CD4-positive, alpha-beta memory T cell (primary cell): ENCODE measurements at regions of chr10 and their contacts with region 1.

Region 1: DNA sequence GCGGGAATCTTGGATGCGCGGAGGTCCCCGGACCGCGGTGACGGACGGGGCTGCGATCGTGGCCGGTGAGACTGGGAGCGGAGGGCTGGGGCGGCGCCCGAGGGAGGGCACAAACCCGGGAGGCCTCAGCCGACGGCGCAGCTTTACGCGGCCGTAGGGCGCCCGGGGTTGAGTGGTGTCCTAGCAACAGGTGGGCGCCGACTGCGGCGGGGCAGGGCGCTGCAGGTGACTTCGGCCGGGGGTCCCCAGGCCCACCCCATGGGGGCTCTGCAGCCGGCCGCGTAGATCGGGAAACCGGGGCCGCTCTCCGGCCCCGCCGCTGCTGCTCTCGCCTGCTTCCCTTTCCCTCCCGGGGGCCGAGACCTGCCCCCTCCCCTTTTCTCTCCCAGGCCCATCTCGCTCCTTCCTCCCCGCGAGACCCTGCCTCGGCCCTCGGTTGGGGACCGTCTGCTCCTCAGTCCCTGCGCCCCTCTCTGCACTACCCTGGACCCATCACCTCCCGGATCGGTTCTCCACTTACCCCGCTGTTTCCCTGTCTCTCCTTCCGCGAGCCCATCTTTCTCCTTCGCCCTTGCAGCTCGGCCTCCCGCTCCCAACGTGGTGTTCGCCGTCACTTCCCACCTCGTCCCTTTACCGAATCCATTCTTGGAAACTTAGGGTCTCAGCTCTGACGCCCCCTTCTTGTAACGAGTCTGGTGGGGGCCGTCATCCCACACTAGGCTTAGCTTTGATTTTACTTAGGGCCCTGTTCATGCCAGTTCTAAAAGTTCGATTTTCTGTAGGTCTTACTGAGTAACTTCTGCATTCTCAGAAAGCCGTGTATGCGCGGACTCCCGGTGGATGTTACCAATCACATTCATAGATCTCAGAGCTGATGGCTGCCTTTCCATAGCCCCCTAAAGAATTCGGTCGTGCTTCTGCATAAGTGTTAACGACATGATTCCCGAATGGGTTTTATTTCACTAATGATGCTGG is 18.5 kb upstream of the ACBD5 start:
- DNase-seq: peak in 2 of 5 donors; percentile 11 to 23
- H3K4me3 ChIP-seq: peak overlapping the region; percentile 17 to 55
- H3K4me3 Mint-ChIP-seq: peak overlapping the region; percentile 83 to 98 (median 93)
- H3K27ac ChIP-seq: no peak overlapping the region
- H3K27ac Mint-ChIP-seq: peak overlapping the region; percentile 17 to 90 (median 63)
- H3K4me1 ChIP-seq: peaks cover 21% of the 10 kb centered on the region
- H3K4me1 Mint-ChIP-seq: peaks cover 19 to 29% (median 23%) of the 10 kb centered on the region in 4 donors
- H3K27me3 ChIP-seq: peaks cover 28% of the 10 kb centered on the region
- H3K27me3 Mint-ChIP-seq: peaks cover 22 to 28% of the 10 kb centered on the region in 2 donors

Region 2: GRCh38 chr10:27285108-27285507 is 26.0 kb after region 1 on chr10:
- CTCF ChIA-PET with region 1: no interaction called
- POLR2A ChIA-PET with region 1: no interaction called
- intact Hi-C with region 1: loop called (anchors 1 kb)
- DNase-seq: peak; percentile 34 to 55 (median 37)
- H3K4me3 ChIP-seq: no peak overlapping the region
- H3K4me3 Mint-ChIP-seq: no peak overlapping the region
- H3K27ac ChIP-seq: no peak overlapping the region
- H3K27ac Mint-ChIP-seq: no peak overlapping the region
- H3K4me1 ChIP-seq: no peaks in the 10 kb centered on the region
- H3K4me1 Mint-ChIP-seq: peaks cover 0 to 4% (median 3%) of the 10 kb centered on the region in 4 donors
- H3K27me3 ChIP-seq: no peaks in the 10 kb centered on the region
- H3K27me3 Mint-ChIP-seq: no peaks in the 10 kb centered on the region

Region 3: GRCh38 chr10:27914888-27915287 is 655.8 kb after region 1 on chr10:
- CTCF ChIA-PET with region 1: no interaction called
- POLR2A ChIA-PET with region 1: no interaction called
- intact Hi-C with region 1: no loop called
- DNase-seq: no peak
- H3K4me3 ChIP-seq: no peak overlapping the region
- H3K4me3 Mint-ChIP-seq: no peak overlapping the region
- H3K27ac ChIP-seq: no peak overlapping the region
- H3K27ac Mint-ChIP-seq: no peak overlapping the region
- H3K4me1 ChIP-seq: no peaks in the 10 kb centered on the region
- H3K4me1 Mint-ChIP-seq: no peaks in the 10 kb centered on the region
- H3K27me3 ChIP-seq: no peaks in the 10 kb centered on the region
- H3K27me3 Mint-ChIP-seq: peaks cover 4 to 12% of the 10 kb centered on the region in 2 donors